HEK293T (cell line): ENCODE measurements at regions of chr2 and their contacts with region 1.

Region 1: GRCh38 chr2:10434886-10435819 is 13.0 kb downstream of the ODC1 start:
- DNase-seq: peak; percentile 89

Region 2: GRCh38 chr2:10072656-10073480 is 362.3 kb before region 1 on chr2:
- CTCF ChIA-PET with region 1: interaction called, 20 read pairs
- POLR2A ChIA-PET with region 1: interaction called, 4 read pairs
- DNase-seq: peak; percentile 90

Region 3: GRCh38 chr2:10140841-10141610 is 294.1 kb before region 1 on chr2:
- CTCF ChIA-PET with region 1: interaction called, 19 read pairs
- POLR2A ChIA-PET with region 1: no interaction called
- DNase-seq: no peak

Region 4: DNA sequence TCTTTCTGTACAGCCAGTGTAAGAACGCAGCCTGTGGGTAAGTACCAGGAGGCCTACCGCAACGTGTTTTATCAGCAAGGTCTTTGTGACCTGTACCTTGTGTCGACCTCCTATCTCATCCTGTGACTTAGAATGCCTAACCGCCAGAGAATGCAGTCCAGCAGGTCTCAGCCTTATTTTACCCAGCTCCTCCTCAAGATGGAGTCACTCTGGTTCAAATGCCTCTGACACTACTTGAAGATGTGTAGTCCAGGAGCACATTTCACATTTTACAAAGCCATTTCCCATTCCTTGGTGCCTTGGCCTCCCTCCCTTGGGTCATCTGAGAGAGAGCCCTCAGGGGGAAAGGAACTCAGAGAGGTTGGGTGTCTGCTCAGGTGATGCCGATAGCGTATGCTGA is 139.0 kb before region 1 on chr2:
- CTCF ChIA-PET with region 1: interaction called, 10 read pairs
- POLR2A ChIA-PET with region 1: no interaction called
- DNase-seq: no peak

Region 5: DNA sequence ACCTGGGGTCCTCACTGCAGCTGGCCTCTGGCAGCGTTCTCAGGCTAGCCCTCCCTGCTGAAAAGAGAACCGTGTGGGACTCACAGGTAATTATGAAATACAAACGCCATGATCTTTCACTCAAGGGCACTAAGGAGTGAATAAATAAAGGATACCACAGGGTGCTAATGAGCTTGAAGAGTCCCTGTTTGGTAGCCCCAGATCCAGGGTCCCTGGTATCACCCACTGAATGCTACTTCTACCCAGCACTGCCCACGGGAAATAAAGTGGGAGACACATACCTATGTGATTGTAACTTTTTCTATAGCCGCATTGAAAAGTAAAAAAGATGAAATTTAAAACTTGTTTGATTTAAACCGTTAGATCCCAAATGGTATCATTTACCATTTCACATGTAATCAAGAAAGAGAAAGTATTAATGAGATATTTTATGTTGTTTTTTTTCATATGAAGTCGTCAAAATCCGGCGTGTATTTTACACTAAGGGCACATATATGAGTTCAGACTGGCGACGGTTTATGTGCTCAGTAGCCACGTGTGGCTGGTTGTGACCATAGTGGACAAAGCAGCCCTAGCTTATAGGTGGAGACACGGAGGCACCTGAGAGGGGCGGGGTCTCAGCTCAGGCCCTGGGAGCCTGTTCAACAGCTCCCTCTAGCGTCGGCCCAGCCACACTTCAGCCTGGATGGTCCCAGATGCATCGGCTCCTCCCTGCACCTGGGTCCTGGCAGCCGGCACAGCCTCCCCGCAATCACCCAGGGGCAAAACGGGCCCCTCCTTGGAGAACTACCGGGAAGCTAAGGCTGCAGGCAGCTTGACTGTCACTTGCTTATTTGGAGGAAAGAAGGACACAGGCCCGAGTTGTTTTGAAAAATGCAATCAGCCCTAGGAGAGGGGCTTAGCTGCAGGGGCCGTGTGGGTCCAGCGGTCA is 26.2 kb before region 1 on chr2:
- CTCF ChIA-PET with region 1: interaction called, 18 read pairs
- POLR2A ChIA-PET with region 1: no interaction called
- DNase-seq: peak; percentile 92

Region 6: DNA sequence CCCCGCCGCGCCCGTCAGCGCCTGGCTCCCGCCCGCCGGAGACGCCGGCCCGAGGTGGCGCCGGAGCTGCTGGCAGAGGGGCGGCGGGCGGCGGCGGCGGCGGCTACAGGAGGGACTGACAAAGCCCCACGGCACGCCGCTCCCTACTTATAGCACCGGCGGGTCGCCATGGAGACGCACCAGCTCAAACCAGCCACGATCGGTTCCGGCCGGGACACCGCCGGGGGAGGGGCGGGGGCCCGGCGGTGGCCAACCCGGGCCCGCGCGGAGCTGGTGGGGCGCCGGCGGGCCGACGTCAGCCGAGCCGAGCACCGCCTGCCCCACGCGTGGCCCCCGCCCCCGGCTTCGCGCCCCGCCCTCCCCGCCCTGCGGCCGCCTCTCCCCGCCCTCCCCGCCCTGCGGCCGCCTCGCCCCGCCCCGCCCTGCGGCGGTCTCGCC is 13.1 kb after region 1 on chr2 and contains the start of gene ODC1:
- CTCF ChIA-PET with region 1: interaction called, 11 read pairs
- POLR2A ChIA-PET with region 1: interaction called, 19 read pairs
- DNase-seq: peak; percentile 95

Region 7: GRCh38 chr2:10504994-10505820 is 70.1 kb after region 1 on chr2:
- CTCF ChIA-PET with region 1: no interaction called
- POLR2A ChIA-PET with region 1: no interaction called
- DNase-seq: no peak